Pancreas (tissue), 10 donors: ENCODE measurements at regions of chr14 and their contacts with region 1.

Region 1: DNA sequence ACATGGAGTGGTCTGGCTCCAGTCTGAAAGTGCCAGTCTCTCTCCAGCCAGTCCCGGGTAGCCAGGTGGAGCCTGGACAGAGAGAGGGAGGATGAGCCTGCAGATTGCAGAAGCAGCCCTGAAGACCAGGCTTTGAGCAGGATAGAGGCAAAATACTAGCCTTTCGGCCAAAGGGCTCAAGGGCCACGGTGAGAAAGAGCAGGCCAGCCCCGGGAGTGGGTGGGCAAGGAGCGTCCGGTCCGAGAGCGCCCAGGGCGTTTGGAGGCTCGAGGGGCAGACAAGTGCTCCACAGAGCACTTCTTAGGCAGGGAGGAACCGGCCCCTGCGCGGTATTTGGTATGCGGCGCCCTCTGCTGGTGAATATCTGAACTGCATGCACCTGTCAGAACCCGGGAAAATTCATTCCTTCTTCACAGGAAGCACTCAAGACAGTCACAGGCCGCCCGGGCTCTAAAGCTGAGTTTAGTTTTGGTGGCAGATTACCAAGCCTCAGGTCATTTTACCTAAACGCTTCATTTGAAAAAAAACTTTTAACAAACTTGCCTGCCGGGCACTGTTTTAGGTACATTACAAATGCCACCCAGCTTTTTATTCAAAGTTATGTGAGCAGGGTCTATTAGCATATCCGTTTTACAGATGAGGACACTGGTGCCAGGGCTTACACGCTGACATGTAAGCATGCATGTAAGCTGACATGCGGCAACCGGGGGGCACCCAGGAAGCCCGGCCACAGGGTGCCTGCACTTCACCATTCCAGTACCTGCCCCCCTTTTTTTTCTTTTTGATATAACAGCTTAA is 21.0 kb upstream of the PSMC1 start:
- DNase-seq: peak; percentile 16 to 86 (median 58)
- ATAC-seq: peak; percentile 66 to 98 (median 85)
- H3K4me3 ChIP-seq: no peak overlapping the region
- H3K27ac ChIP-seq: no peak overlapping the region
- H3K4me1 ChIP-seq: no peaks in the 10 kb centered on the region
- H3K27me3 ChIP-seq: no peaks in the 10 kb centered on the region
- CTCF ChIP-seq: peak; percentile 84 to 88 (median 88)

Region 2: DNA sequence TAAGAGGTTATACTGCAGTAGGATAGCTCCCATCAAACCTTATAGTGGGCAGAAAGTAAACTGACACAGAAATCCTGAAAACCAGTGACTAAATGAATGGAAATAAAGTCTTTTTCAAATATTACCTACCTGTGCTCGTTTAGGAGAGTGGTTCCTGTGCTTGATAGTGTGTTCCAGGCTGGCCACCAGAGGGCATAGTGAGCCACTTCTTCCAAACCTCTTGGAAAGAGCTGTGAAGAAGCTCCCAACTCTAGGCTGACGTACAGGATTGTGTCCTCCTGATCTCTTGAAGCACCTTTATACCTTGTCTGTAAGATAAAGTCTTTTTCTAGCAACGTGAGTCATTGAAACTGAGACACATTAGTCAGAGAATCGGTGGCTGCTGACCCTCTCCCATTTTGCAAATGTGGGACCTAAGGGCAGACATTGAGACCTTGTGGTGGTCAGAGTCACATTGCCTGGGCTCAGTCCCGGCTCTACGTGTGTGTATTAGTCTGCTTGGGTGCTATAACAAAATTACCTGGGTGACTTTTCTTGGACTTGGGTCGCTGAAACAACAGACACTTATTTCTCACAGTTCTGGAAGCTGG is 262.0 kb before region 1 on chr14:
- intact Hi-C with region 1: loop called in 2 of 3 experiments (anchors 10 kb)
- DNase-seq: peak in 5 of 6 donors; percentile 16 to 67 (median 54)
- ATAC-seq: peak; percentile 70 to 90 (median 86)
- H3K4me3 ChIP-seq: no peak overlapping the region
- H3K27ac ChIP-seq: no peak overlapping the region
- H3K4me1 ChIP-seq: no peaks in the 10 kb centered on the region
- H3K27me3 ChIP-seq: no peaks in the 10 kb centered on the region
- CTCF ChIP-seq: peak; percentile 56 to 76 (median 67)

Region 3: GRCh38 chr14:90331497-90332435 is 96.4 kb after region 1 on chr14 and contains the start of gene NRDE2:
- intact Hi-C with region 1: no loop called
- DNase-seq: peak; percentile 99 to 100 (median 100)
- ATAC-seq: peak; percentile 99 to 100 (median 99)
- H3K4me3 ChIP-seq: peak within 1 kb of the TSS; percentile 42 to 74 (median 66)
- H3K27ac ChIP-seq: peak within 1 kb of the TSS; percentile 46 to 84 (median 62)
- H3K4me1 ChIP-seq: peaks cover 0 to 6% (median 5%) of the 10 kb centered on the region in 3 donors
- H3K27me3 ChIP-seq: no peaks in the 10 kb centered on the region
- CTCF ChIP-seq: no peak
- total RNA-seq, gene NRDE2: 7.0 to 12.7 (median 8.6) TPM